Caco-2 (cell line): ENCODE measurements at regions of chr16 and their contacts with region 1.

Region 1: GRCh38 chr16:70576431-70577255 is 53.0 kb downstream of the SF3B3 start:
- DNase-seq: peak in 1 of 2 experiments; percentile 51
- H3K4me3 ChIP-seq: no peak overlapping the region
- H3K4me3 Mint-ChIP-seq: no peak overlapping the region
- H3K27ac Mint-ChIP-seq: peak overlapping the region; percentile 31
- H3K4me1 ChIP-seq: peaks cover 5% of the 10 kb centered on the region; the same call in 1 of the 2 replicates
- H3K4me1 Mint-ChIP-seq: no peaks in the 10 kb centered on the region
- H3K27me3 ChIP-seq: no peaks in the 10 kb centered on the region
- H3K27me3 Mint-ChIP-seq: no peaks in the 10 kb centered on the region
- CTCF ChIP-seq: no peak

Region 2: GRCh38 chr16:70614208-70614951 is 37.7 kb after region 1 on chr16:
- CTCF ChIA-PET with region 1: no interaction called
- POLR2A ChIA-PET with region 1: no interaction called
- intact Hi-C with region 1: loop called (anchors 2 kb)
- DNase-seq: peak in 1 of 2 experiments; percentile 69
- H3K4me3 ChIP-seq: no peak overlapping the region
- H3K4me3 Mint-ChIP-seq: no peak overlapping the region
- H3K27ac Mint-ChIP-seq: no peak overlapping the region
- H3K4me1 ChIP-seq: peaks cover 21% of the 10 kb centered on the region
- H3K4me1 Mint-ChIP-seq: peaks cover 31% of the 10 kb centered on the region
- H3K27me3 ChIP-seq: no peaks in the 10 kb centered on the region
- H3K27me3 Mint-ChIP-seq: no peaks in the 10 kb centered on the region
- CTCF ChIP-seq: no peak

Region 3: GRCh38 chr16:70630960-70631745 is 54.5 kb after region 1 on chr16:
- CTCF ChIA-PET with region 1: no interaction called
- POLR2A ChIA-PET with region 1: no interaction called
- intact Hi-C with region 1: no loop called
- DNase-seq: no peak
- H3K4me3 ChIP-seq: no peak overlapping the region
- H3K4me3 Mint-ChIP-seq: no peak overlapping the region
- H3K27ac Mint-ChIP-seq: no peak overlapping the region
- H3K4me1 ChIP-seq: no peaks in the 10 kb centered on the region
- H3K4me1 Mint-ChIP-seq: no peaks in the 10 kb centered on the region
- H3K27me3 ChIP-seq: no peaks in the 10 kb centered on the region
- H3K27me3 Mint-ChIP-seq: no peaks in the 10 kb centered on the region
- CTCF ChIP-seq: no peak